ENCODE measurements at regions of chr10 and their contacts with region 1.

Region 1: DNA sequence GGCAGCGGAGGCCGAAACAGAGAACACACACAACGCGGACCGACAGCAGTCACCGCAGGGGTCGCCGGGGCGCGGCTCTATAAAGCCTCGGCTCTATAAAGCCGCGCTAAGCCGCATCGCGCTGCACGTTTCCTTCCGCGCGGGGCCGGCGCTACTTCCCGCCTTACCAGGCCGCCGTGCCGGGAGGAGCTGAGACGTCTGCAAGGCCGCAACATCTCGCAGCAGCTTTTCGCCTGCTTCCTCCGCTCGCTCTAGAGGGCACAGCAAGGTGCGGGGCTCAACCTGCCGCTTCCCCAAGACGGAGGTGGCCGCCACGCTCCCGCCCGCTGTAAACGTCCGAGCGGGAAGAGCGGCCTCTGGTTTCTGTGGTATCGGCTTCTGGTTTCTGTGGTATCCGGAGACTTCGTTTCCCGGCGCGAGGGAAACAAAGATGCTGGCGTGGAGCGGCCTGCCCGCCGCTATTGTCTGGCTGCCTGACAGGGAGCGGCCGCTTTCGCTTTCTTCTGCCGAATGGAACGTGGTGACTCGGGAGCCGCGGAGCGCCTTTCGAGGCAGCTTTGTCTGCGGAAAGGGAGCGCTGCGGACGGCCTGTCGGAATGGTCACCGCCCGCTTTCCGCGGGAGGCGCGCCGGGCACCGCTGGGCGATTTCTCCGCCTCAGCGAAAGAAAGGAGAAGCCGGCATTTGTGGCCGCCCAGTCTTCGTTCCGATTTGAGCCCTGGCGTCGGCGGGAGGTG is 91.8 kb downstream of the SPAG6 start:
- DNase-seq: peak; percentile 90
- ATAC-seq: peak; percentile 94
- H3K4me3 Mint-ChIP-seq: peak overlapping the region; percentile 89
- H3K27ac Mint-ChIP-seq: peak overlapping the region; percentile 95
- H3K4me1 Mint-ChIP-seq: peaks cover 37% of the 10 kb centered on the region
- H3K27me3 Mint-ChIP-seq: peaks cover 14% of the 10 kb centered on the region

Region 2: GRCh38 chr10:22391600-22391999 is 45.5 kb before region 1 on chr10:
- CTCF ChIA-PET with region 1: no interaction called
- POLR2A ChIA-PET with region 1: no interaction called
- DNase-seq: no peak
- ATAC-seq: no peak
- H3K4me3 Mint-ChIP-seq: no peak overlapping the region
- H3K27ac Mint-ChIP-seq: no peak overlapping the region
- H3K4me1 Mint-ChIP-seq: no peaks in the 10 kb centered on the region
- H3K27me3 Mint-ChIP-seq: peaks cover 6% of the 10 kb centered on the region

Region 3: GRCh38 chr10:22491931-22492615 is 55.0 kb after region 1 on chr10:
- CTCF ChIA-PET with region 1: no interaction called
- POLR2A ChIA-PET with region 1: interaction called, 16 read pairs
- DNase-seq: peak; percentile 82
- ATAC-seq: peak; percentile 96
- H3K4me3 Mint-ChIP-seq: peak overlapping the region; percentile 36
- H3K27ac Mint-ChIP-seq: peak overlapping the region; percentile 48
- H3K4me1 Mint-ChIP-seq: peaks cover 32% of the 10 kb centered on the region
- H3K27me3 Mint-ChIP-seq: peaks cover 33% of the 10 kb centered on the region

Measured in activated CD8-positive, alpha-beta T cell treated with anti-CD3 and anti-CD28 coated beads, Interleukin-2, amount 10 ng/mL, durations not matched to agents 7 days and 5 days (primary cell).